A673 (cell line): ENCODE measurements at regions of chr15 and their contacts with region 1.

Region 1: GRCh38 chr15:80856809-80857377 is 77.7 kb downstream of the CEMIP start:
- DNase-seq: no peak
- H3K4me3 ChIP-seq: no peak overlapping the region
- H3K27ac ChIP-seq: no peak overlapping the region
- H3K4me1 ChIP-seq: no peaks in the 10 kb centered on the region
- H3K27me3 ChIP-seq: peaks cover 1% of the 10 kb centered on the region
- CTCF ChIP-seq: no peak

Region 2: DNA sequence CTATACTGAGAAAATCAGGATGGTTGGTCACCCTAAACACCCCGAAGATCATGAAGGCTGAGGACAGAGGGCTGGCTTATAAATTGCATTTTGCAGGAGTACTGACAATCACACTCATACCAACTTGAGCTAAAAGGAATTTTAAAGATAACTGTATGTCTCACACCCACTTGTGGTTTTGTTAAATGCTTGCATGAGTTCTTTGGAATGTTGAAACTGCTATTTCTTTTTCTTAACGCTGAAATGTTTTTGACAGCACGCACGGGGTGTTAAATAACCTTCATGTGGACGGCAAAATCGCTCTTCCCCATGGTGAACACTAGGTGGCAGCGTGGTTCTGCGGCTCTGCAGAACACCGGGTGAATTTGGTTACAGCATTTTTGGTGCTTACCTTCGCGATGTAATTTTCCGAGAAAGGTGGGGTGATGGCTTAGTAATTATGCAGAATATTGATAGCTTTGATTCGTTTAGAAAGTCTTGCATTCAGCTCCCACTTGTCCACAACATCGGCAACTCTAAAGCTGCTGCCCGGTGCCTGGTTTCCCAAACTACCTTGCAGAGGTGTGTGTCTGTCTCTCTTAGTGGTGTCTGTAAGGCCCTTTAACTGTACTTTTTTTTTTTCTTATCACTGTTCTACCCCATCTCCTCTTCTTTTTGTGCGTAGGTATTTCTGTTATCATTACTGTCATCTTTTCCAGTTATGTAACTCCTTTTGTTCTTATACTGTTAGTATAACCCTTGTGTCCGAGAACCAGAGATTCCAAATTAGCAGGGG is 401.0 kb before region 1 on chr15:
- CTCF ChIA-PET with region 1: no interaction called
- POLR2A ChIA-PET with region 1: no interaction called
- intact Hi-C with region 1: loop called (anchors 5 kb)
- DNase-seq: peak; percentile 66
- H3K4me3 ChIP-seq: no peak overlapping the region
- H3K27ac ChIP-seq: no peak overlapping the region
- H3K4me1 ChIP-seq: no peaks in the 10 kb centered on the region
- H3K27me3 ChIP-seq: no peaks in the 10 kb centered on the region
- CTCF ChIP-seq: peak; percentile 93